ENCODE measurements at regions of chr18 and their contacts with region 1.

Region 1: DNA sequence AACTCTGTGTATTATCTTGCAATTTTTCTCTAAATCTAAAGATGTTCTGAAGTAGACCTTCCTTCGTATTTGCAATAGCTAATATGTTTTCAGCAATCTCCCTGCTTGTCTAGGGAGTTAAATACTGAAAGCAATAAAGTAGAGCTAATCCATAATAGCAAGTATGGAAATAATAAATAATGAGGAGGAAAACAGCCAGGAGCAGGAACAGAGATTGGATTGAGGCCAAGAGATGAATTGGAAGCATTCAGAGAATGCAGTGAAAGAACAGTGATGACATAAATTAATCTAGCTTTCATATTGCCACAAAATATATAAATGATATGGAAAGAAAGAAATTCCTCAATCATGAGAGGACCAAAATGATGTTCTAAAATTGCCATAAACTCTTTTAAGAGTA is 679.7 kb downstream of the METTL4 start:
- DNase-seq: no peak
- H3K4me3 ChIP-seq: no peak overlapping the region
- H3K27ac ChIP-seq: no peak overlapping the region
- H3K4me1 ChIP-seq: no peaks in the 10 kb centered on the region
- H3K27me3 ChIP-seq: no peaks in the 10 kb centered on the region
- CTCF ChIP-seq: no peak

Region 2: GRCh38 chr18:1930291-1931270 is 39.0 kb after region 1 on chr18:
- CTCF ChIA-PET with region 1: no interaction called
- POLR2A ChIA-PET with region 1: no interaction called
- intact Hi-C with region 1: loop called (anchors 1 kb)
- DNase-seq: no peak
- H3K4me3 ChIP-seq: no peak overlapping the region
- H3K27ac ChIP-seq: no peak overlapping the region
- H3K4me1 ChIP-seq: no peaks in the 10 kb centered on the region
- H3K27me3 ChIP-seq: no peaks in the 10 kb centered on the region
- CTCF ChIP-seq: no peak

Measured in PC-9 (cell line).